Natural killer cell (primary cell): ENCODE measurements at regions of chr1 and their contacts with region 1.

Region 1: DNA sequence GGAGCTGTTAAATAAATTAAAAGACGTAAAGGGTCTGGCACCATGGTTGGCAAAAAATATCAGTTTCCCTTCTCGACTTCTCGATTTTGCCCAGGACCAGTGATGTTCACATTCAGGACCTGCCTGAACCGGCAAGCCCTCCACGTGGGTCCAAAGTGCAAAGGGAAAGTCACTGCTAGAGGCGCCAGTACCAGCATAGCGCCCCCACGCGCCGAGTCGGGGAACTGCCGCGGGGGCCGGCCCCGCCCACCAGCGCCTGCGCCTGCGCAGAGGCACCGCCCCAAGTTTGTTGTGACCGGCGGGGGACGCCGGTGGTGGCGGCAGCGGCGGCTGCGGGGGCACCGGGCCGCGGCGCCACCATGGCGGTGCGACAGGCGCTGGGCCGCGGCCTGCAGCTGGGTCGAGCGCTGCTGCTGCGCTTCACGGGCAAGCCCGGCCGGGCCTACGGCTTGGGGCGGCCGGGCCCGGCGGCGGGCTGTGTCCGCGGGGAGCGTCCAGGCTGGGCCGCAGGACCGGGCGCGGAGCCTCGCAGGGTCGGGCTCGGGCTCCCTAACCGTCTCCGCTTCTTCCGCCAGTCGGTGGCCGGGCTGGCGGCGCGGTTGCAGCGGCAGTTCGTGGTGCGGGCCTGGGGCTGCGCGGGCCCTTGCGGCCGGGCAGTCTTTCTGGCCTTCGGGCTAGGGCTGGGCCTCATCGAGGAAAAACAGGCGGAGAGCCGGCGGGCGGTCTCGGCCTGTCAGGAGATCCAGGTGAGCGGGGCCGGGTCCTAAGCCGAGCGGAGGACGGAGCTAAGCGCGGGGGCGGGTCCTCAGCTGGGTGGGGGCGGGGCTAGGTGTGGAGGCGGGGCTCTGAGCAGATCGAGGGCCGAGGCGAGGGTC is at the start of gene PINK1:
- DNase-seq: peak; percentile 87 to 95
- ATAC-seq: peak; percentile 87 to 95 (median 87)
- H3K4me3 ChIP-seq: peak within 1 kb of the TSS; percentile 45
- H3K4me3 Mint-ChIP-seq: peak within 1 kb of the TSS; percentile 93
- H3K27ac ChIP-seq: peak within 1 kb of the TSS; percentile 51
- H3K27ac Mint-ChIP-seq: peak within 1 kb of the TSS; percentile 80 to 87
- H3K4me1 ChIP-seq: peaks cover 16% of the 10 kb centered on the region
- H3K4me1 Mint-ChIP-seq: peaks cover 10 to 15% of the 10 kb centered on the region in 2 donors
- H3K27me3 ChIP-seq: no peaks in the 10 kb centered on the region
- H3K27me3 Mint-ChIP-seq: peaks cover 2 to 9% of the 10 kb centered on the region in 2 donors
- CTCF ChIP-seq: peak; percentile 97
- total RNA-seq, gene PINK1: 10.8 to 16.2 (median 15.0) TPM

Region 2: GRCh38 chr1:20521960-20522861 is 111.2 kb before region 1 on chr1:
- intact Hi-C with region 1: loop called (anchors 2 kb)
- DNase-seq: peak; percentile 45 to 80
- ATAC-seq: peak; percentile 59 to 74 (median 64)
- H3K4me3 ChIP-seq: no peak overlapping the region
- H3K4me3 Mint-ChIP-seq: no peak overlapping the region
- H3K27ac ChIP-seq: no peak overlapping the region
- H3K27ac Mint-ChIP-seq: no peak overlapping the region
- H3K4me1 ChIP-seq: no peaks in the 10 kb centered on the region
- H3K4me1 Mint-ChIP-seq: peaks cover 0 to 5% of the 10 kb centered on the region in 2 donors
- H3K27me3 ChIP-seq: no peaks in the 10 kb centered on the region
- H3K27me3 Mint-ChIP-seq: peaks cover 6 to 17% of the 10 kb centered on the region in 2 donors
- CTCF ChIP-seq: peak; percentile 88

Region 3: GRCh38 chr1:20574686-20575540 is 58.5 kb before region 1 on chr1:
- intact Hi-C with region 1: no loop called
- DNase-seq: peak; percentile 51 to 69
- ATAC-seq: peak; percentile 38 to 87 (median 64)
- H3K4me3 ChIP-seq: no peak overlapping the region
- H3K4me3 Mint-ChIP-seq: no peak overlapping the region
- H3K27ac ChIP-seq: no peak overlapping the region
- H3K27ac Mint-ChIP-seq: no peak overlapping the region
- H3K4me1 ChIP-seq: no peaks in the 10 kb centered on the region
- H3K4me1 Mint-ChIP-seq: no peaks in the 10 kb centered on the region
- H3K27me3 ChIP-seq: no peaks in the 10 kb centered on the region
- H3K27me3 Mint-ChIP-seq: peaks cover 9 to 20% of the 10 kb centered on the region in 2 donors
- CTCF ChIP-seq: peak; percentile 22